HEK293 (cell line): ENCODE measurements at regions of chr14 and their contacts with region 1.

Region 1: DNA sequence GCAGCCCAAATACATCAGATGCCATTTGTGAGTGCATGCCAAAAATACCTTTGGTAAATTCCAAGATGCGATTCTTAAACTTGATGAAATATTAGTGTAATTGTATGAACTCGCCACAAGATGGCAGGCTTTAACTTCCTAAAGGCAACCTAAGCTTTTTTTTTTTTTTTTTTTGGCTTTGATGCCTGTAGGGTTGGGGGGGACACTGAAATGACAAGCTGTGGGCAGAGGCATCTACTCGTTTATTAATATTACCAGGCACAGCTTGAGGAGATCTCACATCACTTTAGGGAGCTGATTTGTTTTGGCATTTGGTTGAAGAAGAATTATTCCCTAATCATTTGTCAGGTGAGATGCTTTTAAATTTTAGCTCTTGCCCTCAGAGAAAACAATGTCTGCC is 126.7 kb upstream of the CCDC196 start:
- H3K4me3 ChIP-seq: no peak overlapping the region
- H3K27ac ChIP-seq: no peak overlapping the region
- H3K4me1 ChIP-seq: peaks cover 5% of the 10 kb centered on the region; the same call in 1 of the 2 replicates
- CTCF ChIP-seq: peak; percentile 52; the same call in 1 of the 2 replicates

Region 2: DNA sequence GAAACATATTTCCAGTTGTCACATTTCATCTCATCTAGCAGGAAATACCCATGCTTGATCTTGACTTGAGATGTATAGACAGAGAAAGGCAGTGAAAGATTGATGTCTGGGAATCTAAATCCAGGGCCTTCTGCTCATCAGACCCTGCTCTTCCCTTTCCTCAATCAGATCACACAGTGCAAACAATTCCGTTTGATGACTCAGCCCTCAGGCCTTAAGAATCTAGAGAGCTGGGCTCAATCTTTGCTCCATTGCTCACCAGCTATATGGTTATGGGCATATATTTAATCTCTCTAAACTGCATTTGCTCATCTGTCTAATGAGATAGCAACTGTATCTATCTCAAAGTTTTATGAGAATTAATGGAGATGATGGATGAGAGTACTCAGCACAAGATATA is 75.2 kb before region 1 on chr14:
- CTCF ChIA-PET with region 1: no interaction called
- POLR2A ChIA-PET with region 1: no interaction called
- H3K4me3 ChIP-seq: no peak overlapping the region
- H3K27ac ChIP-seq: no peak overlapping the region
- H3K4me1 ChIP-seq: no peaks in the 10 kb centered on the region
- CTCF ChIP-seq: no peak

Region 3: GRCh38 chr14:66295386-66295785 is 64.1 kb before region 1 on chr14:
- CTCF ChIA-PET with region 1: no interaction called
- POLR2A ChIA-PET with region 1: no interaction called
- H3K4me3 ChIP-seq: no peak overlapping the region
- H3K27ac ChIP-seq: no peak overlapping the region
- H3K4me1 ChIP-seq: no peaks in the 10 kb centered on the region
- CTCF ChIP-seq: no peak

Region 4: DNA sequence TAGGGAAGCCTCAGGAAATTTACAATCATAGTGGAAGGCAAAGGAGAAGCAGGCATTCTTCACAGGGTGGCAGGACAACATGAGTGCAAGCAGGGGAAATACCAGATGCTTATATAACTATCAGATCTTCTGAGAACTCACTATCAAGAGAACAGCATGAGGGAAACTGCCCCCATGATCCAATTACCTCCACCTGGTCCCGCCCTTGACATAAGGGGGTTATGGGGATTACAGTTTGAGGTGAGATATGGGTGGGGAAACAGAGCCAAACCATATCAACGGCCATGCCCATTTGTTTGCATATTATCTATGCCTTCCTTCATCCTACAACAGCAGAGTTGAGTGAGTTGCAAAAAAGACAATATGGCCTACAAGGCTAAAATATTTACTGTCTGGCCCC is 13.5 kb before region 1 on chr14:
- CTCF ChIA-PET with region 1: interaction called, 19 read pairs
- POLR2A ChIA-PET with region 1: no interaction called
- H3K4me3 ChIP-seq: no peak overlapping the region
- H3K27ac ChIP-seq: no peak overlapping the region
- H3K4me1 ChIP-seq: no peaks in the 10 kb centered on the region
- CTCF ChIP-seq: no peak

Region 5: GRCh38 chr14:66395300-66395699 is 35.8 kb after region 1 on chr14:
- CTCF ChIA-PET with region 1: interaction called, 38 read pairs
- POLR2A ChIA-PET with region 1: no interaction called
- H3K4me3 ChIP-seq: no peak overlapping the region
- H3K27ac ChIP-seq: no peak overlapping the region
- H3K4me1 ChIP-seq: no peaks in the 10 kb centered on the region
- CTCF ChIP-seq: no peak

Region 6: DNA sequence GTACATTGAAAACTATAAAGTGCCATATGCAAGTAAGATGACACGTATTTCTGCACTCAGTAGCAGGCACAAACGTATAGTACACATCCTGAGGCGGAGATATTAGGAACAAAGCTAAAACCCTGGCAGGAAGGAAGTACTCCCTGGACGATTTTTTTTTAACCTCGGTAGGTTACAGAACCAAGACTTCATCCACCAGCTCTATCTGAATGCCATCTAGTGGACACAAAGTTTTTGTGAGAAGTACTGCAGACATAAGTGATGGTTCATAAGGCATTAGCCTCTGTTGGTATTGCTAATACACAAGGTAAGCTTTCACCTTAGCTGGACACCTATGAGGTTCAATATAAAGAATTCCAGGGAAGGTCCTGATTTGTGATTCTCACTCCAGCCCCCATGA is 43.7 kb after region 1 on chr14:
- CTCF ChIA-PET with region 1: interaction called, 38 read pairs
- POLR2A ChIA-PET with region 1: no interaction called
- H3K4me3 ChIP-seq: no peak overlapping the region
- H3K27ac ChIP-seq: no peak overlapping the region
- H3K4me1 ChIP-seq: no peaks in the 10 kb centered on the region
- CTCF ChIP-seq: no peak